ENCODE measurements at regions of chr17 and their contacts with region 1.

Region 1: GRCh38 chr17:46832945-46833839 is 14.7 kb upstream of the WNT3 start:
- DNase-seq: no peak
- ATAC-seq: no peak
- H3K4me3 ChIP-seq: no peak overlapping the region
- H3K27ac ChIP-seq: no peak overlapping the region
- H3K4me1 ChIP-seq: no peaks in the 10 kb centered on the region
- CTCF ChIP-seq: no peak
- EP300 ChIP-seq: no peak
- POLR2A ChIP-seq: no peak
- RAD21 ChIP-seq: no peak

Region 2: DNA sequence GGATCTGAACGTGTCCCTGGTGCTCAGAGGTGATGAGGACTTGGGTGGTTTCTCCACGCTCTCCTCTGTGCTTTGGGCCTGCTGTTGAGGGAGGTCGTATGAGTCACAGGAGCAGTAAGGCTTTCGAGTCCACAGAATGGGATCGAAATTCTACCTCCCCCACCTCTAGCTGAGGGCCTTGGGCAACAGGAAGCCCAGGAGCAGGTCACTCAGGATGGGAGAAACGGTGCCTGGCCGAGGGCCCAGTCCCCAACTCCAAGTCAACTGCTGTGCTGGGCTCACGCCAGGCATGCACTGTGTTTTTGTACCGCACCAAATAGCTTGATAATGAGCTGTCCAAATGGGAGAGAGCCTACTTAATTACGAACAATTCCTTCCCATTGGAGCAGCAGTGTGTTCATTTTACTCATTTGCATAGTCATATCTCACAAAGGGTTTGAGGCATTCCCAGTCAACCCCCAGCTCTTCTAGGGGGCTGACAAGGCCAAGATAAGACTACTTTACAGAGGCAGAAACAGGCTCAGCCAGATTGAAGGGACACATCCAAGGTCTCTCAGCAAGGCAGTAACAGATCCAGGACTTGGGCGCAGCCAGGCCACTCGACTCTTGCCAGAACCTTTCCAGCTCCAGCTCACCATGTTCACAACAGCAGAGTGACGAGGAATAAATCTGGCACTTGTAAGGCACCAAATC is 68.3 kb before region 1 on chr17:
- CTCF ChIA-PET with region 1: interaction called, 14 read pairs
- POLR2A ChIA-PET with region 1: no interaction called
- DNase-seq: no peak
- ATAC-seq: peak; percentile 44 to 59; a peak in 4 of 6 replicates
- H3K4me3 ChIP-seq: no peak overlapping the region
- H3K27ac ChIP-seq: peak overlapping the region; percentile 17 to 65; a peak in 4 of 6 replicates
- H3K4me1 ChIP-seq: peaks cover 23% of the 10 kb centered on the region
- CTCF ChIP-seq: no peak
- EP300 ChIP-seq: no peak
- POLR2A ChIP-seq: no peak
- RAD21 ChIP-seq: no peak

Region 3: GRCh38 chr17:46782250-46782953 is 50.8 kb before region 1 on chr17:
- CTCF ChIA-PET with region 1: interaction called, 33 read pairs
- POLR2A ChIA-PET with region 1: no interaction called
- DNase-seq: peak; percentile 67 to 74
- ATAC-seq: peak; percentile 85 to 93
- H3K4me3 ChIP-seq: no peak overlapping the region
- H3K27ac ChIP-seq: peak overlapping the region in 1 of 2 experiments; percentile 68; a peak in 3 of 6 replicates
- H3K4me1 ChIP-seq: 0 out of 3 replicates have a peak, but pooled peaks cover 3% of the 10 kb centered on the region
- CTCF ChIP-seq: peak; percentile 86
- EP300 ChIP-seq: no peak
- POLR2A ChIP-seq: no peak
- RAD21 ChIP-seq: peak; percentile 90

Region 4: GRCh38 chr17:46811978-46812583 is 21.1 kb before region 1 on chr17:
- CTCF ChIA-PET with region 1: interaction called, 20 read pairs
- POLR2A ChIA-PET with region 1: no interaction called
- DNase-seq: no peak
- ATAC-seq: peak in 1 of 2 experiments; percentile 44; a peak in 3 of 6 replicates
- H3K4me3 ChIP-seq: no peak overlapping the region
- H3K27ac ChIP-seq: peak overlapping the region in 1 of 2 experiments; percentile 6; a peak in 1 of 6 replicates
- H3K4me1 ChIP-seq: 0 out of 3 replicates have a peak, but pooled peaks cover 7% of the 10 kb centered on the region
- CTCF ChIP-seq: no peak
- EP300 ChIP-seq: no peak
- POLR2A ChIP-seq: no peak
- RAD21 ChIP-seq: no peak

Region 5: DNA sequence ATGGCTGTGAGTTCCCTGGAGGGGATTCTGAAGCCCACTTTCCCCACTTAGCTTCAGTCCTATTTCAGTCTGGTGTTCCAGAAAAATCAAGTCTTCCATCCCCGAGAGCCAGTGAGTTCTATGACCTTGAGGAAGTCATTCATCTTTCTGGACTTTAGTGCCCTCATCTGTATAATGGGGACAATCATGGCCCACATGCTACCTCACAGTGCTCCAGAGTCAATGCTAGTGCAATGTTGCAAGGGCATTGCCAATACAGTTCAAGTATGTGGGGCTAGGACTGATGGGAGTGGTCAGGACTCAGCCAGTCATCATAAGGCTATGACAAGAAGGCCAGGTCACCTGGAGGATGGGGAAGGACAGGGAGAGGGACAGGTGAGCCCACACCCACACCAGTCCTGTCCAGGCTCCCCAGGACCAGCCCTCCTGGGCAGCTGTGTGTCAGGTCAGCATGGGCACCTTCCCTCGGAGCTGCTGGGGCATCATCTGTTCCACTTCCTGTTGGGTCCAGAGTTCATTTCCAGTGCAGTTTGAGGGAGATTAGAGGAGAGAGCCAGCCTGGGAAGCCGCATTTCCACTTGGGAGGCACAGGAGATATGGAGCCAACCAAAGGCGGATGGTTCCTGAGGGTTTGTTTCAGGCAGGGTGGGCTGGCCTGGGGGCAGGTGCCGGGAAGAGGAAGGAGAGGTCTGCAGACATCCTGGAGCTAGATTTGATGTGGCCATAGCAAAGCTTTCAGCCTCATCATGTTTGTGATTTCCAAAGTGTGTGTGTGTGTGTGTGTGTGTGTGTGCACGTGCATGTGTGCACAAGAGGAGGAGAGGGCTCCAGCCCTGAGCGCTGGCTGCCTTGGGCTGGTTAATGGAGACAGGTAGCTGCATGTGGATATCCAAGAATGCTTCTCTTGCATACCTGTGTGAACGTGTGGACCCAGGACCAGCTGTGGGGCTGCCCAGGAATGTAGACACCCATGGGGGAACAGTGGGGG is 14.3 kb after region 1 on chr17:
- CTCF ChIA-PET with region 1: interaction called, 65 read pairs
- POLR2A ChIA-PET with region 1: no interaction called
- DNase-seq: no peak
- ATAC-seq: no peak
- H3K4me3 ChIP-seq: no peak overlapping the region
- H3K27ac ChIP-seq: no peak overlapping the region
- H3K4me1 ChIP-seq: peaks cover 5% of the 10 kb centered on the region; the same call in 1 of the 3 replicates
- CTCF ChIP-seq: no peak
- EP300 ChIP-seq: no peak
- POLR2A ChIP-seq: no peak
- RAD21 ChIP-seq: no peak

Region 6: GRCh38 chr17:46859996-46860395 is 26.8 kb after region 1 on chr17:
- CTCF ChIA-PET with region 1: interaction called, 22 read pairs
- POLR2A ChIA-PET with region 1: no interaction called
- DNase-seq: no peak
- ATAC-seq: no peak
- H3K4me3 ChIP-seq: no peak overlapping the region
- H3K27ac ChIP-seq: no peak overlapping the region
- H3K4me1 ChIP-seq: no peaks in the 10 kb centered on the region
- CTCF ChIP-seq: no peak
- EP300 ChIP-seq: no peak
- POLR2A ChIP-seq: no peak
- RAD21 ChIP-seq: no peak

Region 7: GRCh38 chr17:46876353-46876887 is 43.2 kb after region 1 on chr17:
- CTCF ChIA-PET with region 1: interaction called, 18 read pairs
- POLR2A ChIA-PET with region 1: no interaction called
- DNase-seq: peak in 1 of 2 experiments; percentile 51
- ATAC-seq: peak; percentile 81 to 92
- H3K4me3 ChIP-seq: no peak overlapping the region
- H3K27ac ChIP-seq: no peak overlapping the region
- H3K4me1 ChIP-seq: peaks cover 2% of the 10 kb centered on the region; the same call in 2 of the 3 replicates
- CTCF ChIP-seq: peak; percentile 34
- EP300 ChIP-seq: no peak
- POLR2A ChIP-seq: no peak
- RAD21 ChIP-seq: peak in 1 of 2 experiments; percentile 39; a peak in 2 of 5 replicates

Region 8: DNA sequence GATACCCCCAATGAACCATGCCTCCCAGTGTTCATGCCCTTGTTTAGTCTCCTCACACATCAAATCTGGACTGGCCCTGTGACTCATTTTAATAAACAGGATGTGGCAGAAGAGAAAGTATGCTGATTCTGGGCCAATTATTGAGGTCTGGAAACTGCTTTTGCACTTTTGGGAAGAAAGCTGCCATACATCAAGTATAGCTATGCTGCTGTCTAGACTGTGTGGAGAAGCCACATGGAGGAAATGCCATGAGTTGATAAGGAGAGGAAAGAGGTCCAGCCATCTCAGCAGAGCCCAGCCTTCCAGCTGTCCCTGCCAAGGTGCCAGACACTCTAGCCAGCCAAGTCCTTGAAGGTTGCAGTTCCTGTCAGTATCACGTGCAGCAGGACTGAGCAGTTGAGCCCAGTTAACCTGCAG is 129.2 kb after region 1 on chr17:
- CTCF ChIA-PET with region 1: no interaction called
- POLR2A ChIA-PET with region 1: no interaction called
- DNase-seq: no peak
- ATAC-seq: peak in 1 of 2 experiments; percentile 41; a peak in 4 of 6 replicates
- H3K4me3 ChIP-seq: no peak overlapping the region
- H3K27ac ChIP-seq: no peak overlapping the region
- H3K4me1 ChIP-seq: 0 out of 3 replicates have a peak, but pooled peaks cover 3% of the 10 kb centered on the region
- CTCF ChIP-seq: no peak
- EP300 ChIP-seq: no peak
- POLR2A ChIP-seq: no peak
- RAD21 ChIP-seq: no peak